Activated T-helper 1 cell treated with anti-CD3 and anti-CD28 coated beads, Interleukin-12 subunit alpha, Interleukin-12 subunit beta, Interleukin-2, Interleukin-4 antibody, amounts not matched to agents 30 ng/mL and 10 ng/mL and 1 ng/mL, durations not matched to agents 14 hours and 24 hours and 36 hours (primary cell): ENCODE measurements at regions of chr20 and their contacts with region 1.

Region 1: DNA sequence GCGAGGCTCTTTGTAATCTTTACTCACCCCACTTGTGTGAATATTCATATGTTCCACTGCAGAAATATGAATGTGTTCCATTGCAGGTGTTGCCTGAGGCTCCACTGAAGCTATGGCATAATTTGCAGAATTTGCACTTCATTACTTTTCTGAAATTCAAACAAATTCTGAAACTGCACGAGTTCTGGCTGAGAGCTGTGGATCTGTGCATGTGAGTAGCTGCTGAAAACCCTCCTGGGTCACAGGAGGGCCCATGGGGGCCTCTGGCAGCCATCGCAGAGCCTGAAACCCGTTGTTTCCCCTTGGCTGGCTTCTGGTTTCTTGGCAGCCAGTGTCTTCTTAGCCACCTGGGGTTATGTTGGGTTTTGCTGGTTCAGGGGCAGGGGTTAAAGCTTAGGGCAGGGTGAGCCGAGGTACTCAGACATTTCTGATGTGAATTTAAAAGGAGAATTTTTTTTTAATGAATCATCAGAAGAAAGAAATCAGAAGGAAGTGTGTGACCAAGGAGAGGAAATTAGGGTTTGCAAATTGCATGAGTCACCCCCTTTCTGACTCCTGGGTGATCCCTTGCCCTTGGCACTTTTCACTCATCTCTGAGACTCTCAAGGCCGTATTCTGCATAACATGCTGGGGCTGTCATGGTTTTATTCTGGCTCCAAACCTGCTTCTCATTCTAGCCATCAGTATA is 40.6 kb downstream of the TOX2 start:
- DNase-seq: peak; percentile 35
- H3K4me3 Mint-ChIP-seq: peak overlapping the region; percentile 53
- H3K27ac Mint-ChIP-seq: peak overlapping the region; percentile 77
- H3K4me1 Mint-ChIP-seq: peaks cover 82% of the 10 kb centered on the region
- H3K27me3 Mint-ChIP-seq: peaks cover 7% of the 10 kb centered on the region

Region 2: DNA sequence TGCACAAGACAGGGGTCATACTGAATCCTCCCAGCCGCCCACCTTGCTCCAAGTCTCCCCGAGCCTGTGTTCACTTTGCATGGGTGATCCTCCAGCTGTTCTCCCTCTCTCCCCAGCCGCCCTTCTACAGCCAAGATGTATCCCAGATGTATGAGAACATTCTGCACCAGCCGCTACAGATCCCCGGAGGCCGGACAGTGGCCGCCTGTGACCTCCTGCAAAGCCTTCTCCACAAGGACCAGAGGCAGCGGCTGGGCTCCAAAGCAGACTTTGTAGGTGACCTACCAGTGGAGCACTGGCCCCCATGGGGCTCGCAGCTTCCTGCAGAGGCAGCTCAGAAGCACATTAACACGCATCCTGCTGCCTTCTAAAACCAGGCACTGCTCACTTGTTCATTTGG is 379.1 kb before region 1 on chr20:
- intact Hi-C with region 1: no loop called
- DNase-seq: no peak
- H3K4me3 Mint-ChIP-seq: no peak overlapping the region
- H3K27ac Mint-ChIP-seq: no peak overlapping the region
- H3K4me1 Mint-ChIP-seq: no peaks in the 10 kb centered on the region
- H3K27me3 Mint-ChIP-seq: peaks cover 3% of the 10 kb centered on the region

Region 3: GRCh38 chr20:43590392-43591323 is 364.5 kb before region 1 on chr20 and contains the start of gene IFT52:
- intact Hi-C with region 1: loop called (anchors 10 kb)
- DNase-seq: peak; percentile 85
- H3K4me3 Mint-ChIP-seq: peak within 1 kb of the TSS; percentile 91
- H3K27ac Mint-ChIP-seq: peak within 1 kb of the TSS; percentile 95
- H3K4me1 Mint-ChIP-seq: peaks cover 22% of the 10 kb centered on the region
- H3K27me3 Mint-ChIP-seq: peaks cover 2% of the 10 kb centered on the region
- total RNA-seq, gene IFT52: 18.3 and 18.7 TPM in 2 replicates

Region 4: GRCh38 chr20:43721429-43722152 is 233.6 kb before region 1 on chr20:
- intact Hi-C with region 1: loop called (anchors 1 kb)
- DNase-seq: no peak
- H3K4me3 Mint-ChIP-seq: peak overlapping the region; percentile 65
- H3K27ac Mint-ChIP-seq: peak overlapping the region; percentile 85
- H3K4me1 Mint-ChIP-seq: peaks cover 34% of the 10 kb centered on the region
- H3K27me3 Mint-ChIP-seq: no peaks in the 10 kb centered on the region

Region 5: DNA sequence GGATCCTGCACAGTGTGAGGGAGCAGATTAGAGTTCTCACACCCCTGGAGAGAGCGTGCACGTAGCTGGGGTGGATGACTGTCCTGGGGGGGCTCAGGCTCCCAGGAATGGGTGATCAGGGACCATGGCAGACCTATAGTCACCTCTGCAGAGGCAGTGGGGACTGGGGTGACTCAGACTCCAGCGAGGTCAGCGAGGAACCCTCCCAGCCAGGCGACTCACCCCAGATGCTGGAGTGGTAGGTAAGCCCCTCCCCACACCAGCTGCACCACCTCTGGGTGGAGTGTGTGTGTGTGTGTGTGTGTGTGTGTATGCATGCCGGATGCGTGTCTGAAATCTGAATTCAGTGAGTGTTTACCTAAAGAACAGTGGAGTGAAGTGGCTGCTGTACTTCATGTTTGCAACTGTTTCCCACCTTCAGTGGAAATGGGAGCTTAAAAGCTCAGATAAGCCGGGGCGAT is 211.0 kb before region 1 on chr20:
- intact Hi-C with region 1: no loop called
- DNase-seq: no peak
- H3K4me3 Mint-ChIP-seq: no peak overlapping the region
- H3K27ac Mint-ChIP-seq: peak overlapping the region; percentile 4
- H3K4me1 Mint-ChIP-seq: peaks cover 21% of the 10 kb centered on the region
- H3K27me3 Mint-ChIP-seq: no peaks in the 10 kb centered on the region

Region 6: DNA sequence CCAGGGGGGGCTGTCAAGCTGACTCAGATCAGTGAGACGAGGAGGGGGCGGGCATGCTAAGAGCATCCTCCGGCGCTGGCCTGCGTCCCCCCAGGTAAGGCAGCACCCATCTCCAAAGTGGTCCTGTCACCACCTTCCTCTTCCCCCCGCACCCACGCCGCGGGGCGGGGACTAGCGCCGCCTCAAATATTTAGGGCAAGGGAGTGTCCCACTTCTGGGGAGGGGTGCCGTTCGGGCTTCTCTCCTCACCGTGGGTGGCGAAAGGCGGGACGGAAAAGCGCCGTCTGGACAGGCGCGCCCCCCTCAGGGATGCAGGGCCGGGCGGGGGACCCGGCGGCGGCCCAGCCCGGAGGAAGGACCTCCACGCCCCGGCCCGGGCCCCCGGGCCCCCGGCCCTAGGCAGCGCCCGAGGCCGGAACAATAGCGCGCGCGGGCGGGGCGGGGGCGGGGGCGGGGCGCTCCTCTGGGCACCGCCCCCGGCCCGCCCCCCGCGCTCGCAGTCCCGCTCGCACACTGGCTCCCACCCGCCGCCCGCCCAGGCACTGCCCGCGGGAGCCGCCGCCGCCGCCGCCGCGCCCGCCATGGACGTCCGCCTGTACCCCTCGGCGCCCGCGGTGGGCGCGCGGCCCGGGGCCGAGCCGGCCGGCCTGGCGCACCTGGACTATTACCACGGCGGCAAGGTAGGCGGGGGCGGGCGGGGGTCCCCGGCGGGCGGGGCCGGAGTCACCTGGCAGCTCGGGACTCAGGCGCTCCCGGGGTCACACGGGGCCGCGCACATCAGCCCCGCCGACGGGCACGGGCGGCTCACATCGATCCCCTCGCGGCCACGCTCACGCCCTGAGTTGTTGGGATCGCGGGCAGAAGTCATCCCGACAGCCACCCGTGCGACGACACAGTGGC is 40.6 kb before region 1 on chr20 and contains the start of gene TOX2:
- intact Hi-C with region 1: loop called (anchors 1 kb)
- DNase-seq: peak; percentile 42
- H3K4me3 Mint-ChIP-seq: peak within 1 kb of the TSS; percentile 87
- H3K27ac Mint-ChIP-seq: peak within 1 kb of the TSS; percentile 81
- H3K4me1 Mint-ChIP-seq: peaks cover 29% of the 10 kb centered on the region
- H3K27me3 Mint-ChIP-seq: peaks cover 37% of the 10 kb centered on the region
- total RNA-seq, gene TOX2: 4.0 and 4.8 TPM in 2 replicates

Region 7: GRCh38 chr20:43942661-43943290 is 12.4 kb before region 1 on chr20:
- intact Hi-C with region 1: loop called (anchors 1 kb)
- DNase-seq: peak; percentile 33
- H3K4me3 Mint-ChIP-seq: peak overlapping the region; percentile 70
- H3K27ac Mint-ChIP-seq: peak overlapping the region; percentile 88
- H3K4me1 Mint-ChIP-seq: peaks cover 75% of the 10 kb centered on the region
- H3K27me3 Mint-ChIP-seq: peaks cover 14% of the 10 kb centered on the region

Region 8: DNA sequence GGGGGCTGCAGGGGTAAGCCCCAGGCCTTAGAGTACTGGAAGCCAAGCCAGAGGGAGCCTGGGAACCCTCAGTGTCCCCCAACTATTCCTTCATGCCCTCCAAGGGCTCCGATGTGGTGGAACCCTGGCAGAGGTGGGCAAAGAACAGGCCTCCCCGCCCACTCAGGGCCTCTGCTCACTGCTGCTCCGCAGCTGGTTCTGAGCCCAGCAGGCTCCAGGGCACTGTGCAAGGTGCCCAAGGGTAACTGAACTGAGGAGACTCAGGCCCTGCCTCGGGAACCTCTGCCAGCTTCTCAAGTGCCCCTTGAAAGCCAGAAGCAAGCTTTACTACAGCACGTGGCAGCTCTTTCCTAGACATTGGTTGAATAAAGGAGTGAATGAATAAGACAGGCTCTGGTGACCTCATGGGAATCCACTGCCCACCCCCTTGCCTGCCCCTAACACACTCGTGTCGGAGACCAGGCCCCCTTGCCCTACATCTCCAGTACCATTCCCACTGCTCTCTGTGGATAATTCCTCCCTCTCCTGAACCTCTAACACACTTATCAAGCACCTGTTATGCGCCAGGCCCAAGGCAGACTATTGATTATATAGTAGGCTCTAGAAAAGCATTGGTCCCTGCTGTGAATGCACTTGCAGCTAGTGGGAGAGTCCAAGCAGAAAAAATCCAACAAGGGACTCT is 14.4 kb after region 1 on chr20:
- intact Hi-C with region 1: no loop called
- DNase-seq: no peak
- H3K4me3 Mint-ChIP-seq: no peak overlapping the region
- H3K27ac Mint-ChIP-seq: no peak overlapping the region
- H3K4me1 Mint-ChIP-seq: peaks cover 15% of the 10 kb centered on the region
- H3K27me3 Mint-ChIP-seq: peaks cover 14% of the 10 kb centered on the region

Region 9: DNA sequence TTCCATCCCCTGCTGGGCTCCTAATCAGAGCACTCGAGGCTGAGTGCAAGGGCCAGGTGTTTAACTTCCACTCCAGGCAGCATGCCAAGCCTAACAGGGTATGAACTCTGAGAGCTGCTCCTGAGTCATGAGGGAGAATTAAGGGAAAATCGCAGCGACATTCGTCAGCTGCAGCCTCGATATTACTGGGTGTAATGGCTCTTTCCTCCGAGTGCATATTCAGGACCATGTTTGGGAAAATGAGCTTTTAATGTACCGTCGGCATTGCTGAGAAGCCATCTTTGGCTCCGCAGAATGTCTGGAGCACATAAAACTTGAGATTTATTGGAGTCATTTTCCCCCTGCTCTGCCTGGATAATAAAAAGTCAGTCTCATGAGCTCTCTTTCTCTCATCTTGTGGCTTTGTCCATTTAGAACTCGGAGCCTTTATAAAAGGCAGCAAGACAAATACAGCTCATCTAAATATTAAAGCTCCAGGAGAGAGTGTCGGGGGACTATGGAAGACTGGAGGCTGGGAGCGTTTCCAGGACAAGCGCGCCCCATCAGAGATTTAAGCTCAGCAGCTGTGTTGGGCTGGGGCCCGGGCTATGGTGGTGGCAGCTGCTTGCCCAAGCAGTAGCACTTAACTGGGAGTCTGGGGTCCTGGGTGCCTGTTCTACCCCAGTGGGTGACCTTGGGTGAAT is 63.2 kb after region 1 on chr20:
- intact Hi-C with region 1: loop called (anchors 2 kb)
- DNase-seq: no peak
- H3K4me3 Mint-ChIP-seq: no peak overlapping the region
- H3K27ac Mint-ChIP-seq: no peak overlapping the region
- H3K4me1 Mint-ChIP-seq: peaks cover 32% of the 10 kb centered on the region
- H3K27me3 Mint-ChIP-seq: peaks cover 27% of the 10 kb centered on the region

Region 10: GRCh38 chr20:44028868-44029847 is 74.0 kb after region 1 on chr20:
- intact Hi-C with region 1: no loop called
- DNase-seq: peak; percentile 24
- H3K4me3 Mint-ChIP-seq: peak overlapping the region; percentile 68
- H3K27ac Mint-ChIP-seq: peak overlapping the region; percentile 78
- H3K4me1 Mint-ChIP-seq: peaks cover 69% of the 10 kb centered on the region
- H3K27me3 Mint-ChIP-seq: peaks cover 27% of the 10 kb centered on the region